KBM-7 (cell line): ENCODE measurements at regions of chr15 and their contacts with region 1.

Region 1: DNA sequence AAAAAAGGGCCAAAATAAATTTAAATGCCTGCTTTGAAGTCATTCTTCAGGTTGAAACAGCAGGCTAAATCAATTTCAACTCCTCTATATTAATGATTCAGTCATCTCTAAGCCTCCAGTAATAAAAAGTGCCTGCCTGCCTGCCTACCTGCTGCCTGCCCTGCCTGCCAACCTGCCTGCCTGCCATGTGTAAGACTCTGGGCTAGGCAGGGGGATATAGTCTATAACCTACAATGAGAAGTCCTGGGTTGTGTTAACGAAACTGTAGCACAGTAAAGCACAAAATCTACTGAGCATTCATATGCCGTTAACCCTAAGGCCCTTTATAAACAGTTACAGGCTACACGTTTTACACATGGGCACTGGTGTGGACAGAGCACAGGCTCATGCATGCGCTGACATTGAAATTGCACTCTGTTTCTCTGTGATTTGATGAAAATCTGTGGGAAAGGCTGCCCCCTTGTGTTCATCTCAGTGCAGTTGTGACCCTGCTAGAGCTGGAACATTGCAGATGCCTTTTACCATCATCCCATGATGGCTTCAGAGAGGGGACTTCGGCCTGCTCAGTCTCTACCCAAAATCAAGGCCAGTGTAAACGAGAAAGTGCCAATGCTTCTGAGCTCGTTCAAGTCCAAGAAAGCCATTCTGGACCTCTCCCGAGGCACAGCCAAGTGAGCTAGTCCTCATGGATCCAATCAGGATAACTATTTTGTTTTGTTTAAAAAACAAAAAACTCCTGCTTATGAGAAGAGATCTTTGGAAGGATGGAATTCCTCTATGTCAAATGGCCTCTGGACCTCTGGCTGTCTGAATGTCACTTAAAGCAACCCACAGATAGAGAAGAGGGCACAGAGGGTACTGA is 64.6 kb downstream of the EFL1 start:
- DNase-seq: peak; percentile 86

Region 2: GRCh38 chr15:81473177-81473576 is 724.8 kb before region 1 on chr15:
- in situ Hi-C with region 1: loop called (anchors 25 kb)
- DNase-seq: no peak